CD14-positive monocyte (primary cell): ENCODE measurements at regions of chr17 and their contacts with region 1.

Region 1: DNA sequence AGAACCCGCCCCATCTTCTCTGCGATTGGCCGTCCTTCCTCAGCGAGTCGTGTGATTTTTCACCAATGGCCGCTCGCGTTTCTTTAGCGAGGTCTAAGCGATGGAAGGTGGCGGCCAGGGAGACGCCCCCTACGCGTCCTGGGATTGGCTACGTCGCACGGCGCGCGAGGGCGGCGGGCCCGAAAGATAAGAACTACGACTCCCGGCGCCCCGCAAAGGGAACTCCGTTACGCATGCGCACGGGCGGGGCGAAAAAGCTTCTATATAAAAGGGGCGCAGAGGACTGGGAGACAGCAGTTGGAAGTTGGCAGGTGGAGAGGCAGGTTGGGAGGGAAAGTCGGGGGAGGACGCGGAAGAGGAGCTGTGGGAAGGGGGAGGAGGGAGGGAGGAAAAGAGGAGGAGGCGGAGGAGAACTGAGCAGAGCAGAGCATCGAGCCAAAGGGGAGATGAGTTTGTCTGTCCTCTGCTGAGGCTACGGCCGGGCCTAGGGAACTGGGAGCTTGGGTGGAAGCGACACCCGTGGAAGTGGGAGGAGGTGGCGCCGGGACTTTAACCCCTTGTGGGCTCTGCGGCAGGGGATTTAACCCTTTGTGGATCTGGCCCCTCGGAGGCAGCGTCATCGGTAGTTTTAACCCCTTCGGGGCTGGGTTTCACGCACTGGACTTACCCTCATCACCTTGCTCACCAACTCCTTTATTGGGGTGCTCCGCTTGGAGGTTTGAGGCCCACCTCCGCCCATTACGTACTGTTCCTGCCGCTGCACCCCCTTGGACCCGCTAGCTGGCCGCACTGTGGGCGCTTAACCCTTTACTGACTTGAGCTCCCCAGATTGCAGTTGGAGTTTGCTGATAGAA is at the start of gene HEXIM1:
- DNase-seq: peak; percentile 99 to 100 (median 100)
- H3K4me3 ChIP-seq: peak within 1 kb of the TSS; percentile 80 to 92 (median 83)
- H3K4me3 Mint-ChIP-seq: peak within 1 kb of the TSS; percentile 99 to 100
- H3K27ac ChIP-seq: peak within 1 kb of the TSS; percentile 89 to 99
- H3K27ac Mint-ChIP-seq: peak within 1 kb of the TSS; percentile 97 to 100 (median 99)
- H3K4me1 ChIP-seq: peaks cover 56 to 75% of the 10 kb centered on the region in 2 donors
- H3K4me1 Mint-ChIP-seq: peaks cover 53% of the 10 kb centered on the region
- H3K27me3 ChIP-seq: no peaks in the 10 kb centered on the region
- H3K27me3 Mint-ChIP-seq: peaks cover 0 to 2% (median 0%) of the 10 kb centered on the region in 3 donors
- CTCF ChIP-seq: no peak
- polyA plus RNA-seq, gene HEXIM1: 2.2 to 14.8 (median 2.5) TPM

Region 2: DNA sequence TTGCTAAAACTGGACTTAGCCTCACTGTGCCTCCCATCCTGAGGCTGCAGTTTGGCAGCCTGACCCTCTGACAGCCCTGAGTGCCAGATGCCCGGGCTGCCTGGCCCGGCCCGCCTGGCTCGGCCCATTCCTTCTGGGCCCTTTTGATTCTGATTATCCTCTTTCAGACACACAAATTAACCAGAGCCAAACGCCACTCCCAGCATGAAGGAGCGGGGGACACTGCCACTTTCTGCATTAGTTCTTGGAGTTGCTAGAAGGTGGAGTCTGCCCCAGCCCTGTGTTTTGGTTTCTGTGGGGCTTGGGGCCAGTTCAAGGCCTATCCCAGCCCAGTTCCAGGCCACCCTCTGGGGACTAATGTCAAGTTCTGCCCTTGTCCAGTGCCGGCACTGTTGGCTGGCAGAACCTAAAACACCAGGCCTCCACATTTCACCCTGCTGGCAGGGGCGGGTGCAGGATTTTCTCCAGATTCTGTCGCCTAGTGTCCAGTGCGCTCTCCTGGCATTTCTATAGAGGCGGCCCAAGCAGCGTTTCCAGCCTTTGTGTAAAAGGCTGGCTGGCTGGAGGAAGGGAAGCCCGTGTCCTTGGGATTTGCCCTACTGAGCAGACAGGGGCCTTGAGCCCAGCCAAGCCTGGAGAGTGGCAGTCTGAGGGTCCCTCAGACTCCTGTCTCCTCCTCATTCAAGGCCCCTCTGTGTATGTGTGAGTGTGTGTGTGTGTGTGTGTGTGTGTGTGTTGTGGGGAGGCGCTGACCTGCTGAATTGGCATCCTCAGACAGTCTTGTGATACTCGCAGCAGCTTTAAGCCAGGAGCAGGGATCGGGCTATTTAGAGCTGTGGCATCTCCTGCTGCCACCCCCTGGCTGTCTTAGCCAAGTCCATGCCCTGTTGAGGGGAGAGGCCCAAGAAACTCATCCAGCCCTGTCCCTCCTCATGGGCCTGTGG is 37.5 kb before region 1 on chr17:
- intact Hi-C with region 1: no loop called
- DNase-seq: no peak
- H3K4me3 ChIP-seq: no peak overlapping the region
- H3K4me3 Mint-ChIP-seq: no peak overlapping the region
- H3K27ac ChIP-seq: no peak overlapping the region
- H3K27ac Mint-ChIP-seq: peak overlapping the region in 4 of 7 donors; percentile 6 to 78 (median 45)
- H3K4me1 ChIP-seq: no peaks in the 10 kb centered on the region
- H3K4me1 Mint-ChIP-seq: no peaks in the 10 kb centered on the region
- H3K27me3 ChIP-seq: no peaks in the 10 kb centered on the region
- H3K27me3 Mint-ChIP-seq: peaks cover 0 to 5% (median 1%) of the 10 kb centered on the region in 3 donors
- CTCF ChIP-seq: no peak

Region 3: GRCh38 chr17:45161019-45161825 is 12.8 kb after region 1 on chr17:
- intact Hi-C with region 1: loop called (anchors 1 kb)
- DNase-seq: peak; percentile 99 to 100 (median 100)
- H3K4me3 ChIP-seq: peak overlapping the region; percentile 85 to 92 (median 86)
- H3K4me3 Mint-ChIP-seq: peak overlapping the region; percentile 98 to 100
- H3K27ac ChIP-seq: peak overlapping the region; percentile 94 to 97
- H3K27ac Mint-ChIP-seq: peak overlapping the region; percentile 96 to 100 (median 99)
- H3K4me1 ChIP-seq: peaks cover 60 to 76% of the 10 kb centered on the region in 2 donors
- H3K4me1 Mint-ChIP-seq: peaks cover 62% of the 10 kb centered on the region
- H3K27me3 ChIP-seq: no peaks in the 10 kb centered on the region
- H3K27me3 Mint-ChIP-seq: no peaks in the 10 kb centered on the region
- CTCF ChIP-seq: no peak

Region 4: DNA sequence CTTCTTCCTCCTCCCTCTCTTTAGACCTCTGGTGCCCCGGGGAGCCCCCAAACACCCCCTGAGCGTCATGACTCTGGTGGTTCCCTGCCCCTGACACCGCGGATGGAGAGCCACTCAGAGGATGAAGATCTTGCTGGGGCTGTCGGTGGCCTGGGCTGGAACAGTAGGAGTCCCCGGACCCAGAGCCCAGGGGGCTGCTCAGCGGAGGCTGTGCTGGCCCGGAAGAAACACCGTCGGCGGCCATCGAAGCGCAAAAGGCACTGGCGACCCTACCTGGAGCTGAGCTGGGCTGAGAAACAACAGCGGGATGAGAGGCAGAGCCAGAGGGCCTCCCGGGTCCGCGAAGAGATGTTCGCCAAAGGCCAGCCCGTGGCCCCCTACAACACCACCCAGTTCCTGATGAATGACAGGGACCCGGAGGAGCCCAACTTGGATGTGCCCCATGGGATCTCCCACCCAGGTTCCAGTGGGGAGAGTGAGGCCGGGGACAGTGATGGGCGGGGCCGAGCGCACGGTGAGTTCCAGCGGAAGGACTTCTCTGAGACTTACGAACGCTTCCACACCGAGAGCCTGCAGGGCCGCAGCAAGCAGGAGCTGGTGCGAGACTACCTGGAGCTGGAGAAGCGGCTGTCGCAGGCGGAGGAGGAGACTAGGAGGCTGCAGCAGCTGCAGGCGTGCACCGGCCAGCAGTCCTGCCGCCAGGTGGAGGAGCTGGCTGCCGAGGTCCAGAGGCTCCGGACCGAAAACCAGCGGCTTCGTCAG is 20.8 kb after region 1 on chr17:
- intact Hi-C with region 1: loop called in 1 of 2 experiments (anchors 2 kb)
- DNase-seq: no peak
- H3K4me3 ChIP-seq: no peak overlapping the region
- H3K4me3 Mint-ChIP-seq: no peak overlapping the region
- H3K27ac ChIP-seq: peak overlapping the region in 1 of 2 donors; percentile 92
- H3K27ac Mint-ChIP-seq: peak overlapping the region in 1 of 7 donors; percentile 63
- H3K4me1 ChIP-seq: peaks cover 64 to 66% of the 10 kb centered on the region in 2 donors
- H3K4me1 Mint-ChIP-seq: peaks cover 59% of the 10 kb centered on the region
- H3K27me3 ChIP-seq: no peaks in the 10 kb centered on the region
- H3K27me3 Mint-ChIP-seq: no peaks in the 10 kb centered on the region
- CTCF ChIP-seq: no peak